ENCODE measurements at regions of chr6 and their contacts with region 1.

Region 1: GRCh38 chr6:7615611-7616383 is 25.8 kb downstream of the SNRNP48 start:
- DNase-seq: peak; percentile 32
- H3K4me3 Mint-ChIP-seq: peak overlapping the region; percentile 54
- H3K27ac Mint-ChIP-seq: peak overlapping the region; percentile 80
- H3K4me1 Mint-ChIP-seq: peaks cover 27% of the 10 kb centered on the region
- H3K27me3 Mint-ChIP-seq: peaks cover 17% of the 10 kb centered on the region
- CTCF ChIP-seq: peak; percentile 34

Region 2: GRCh38 chr6:7276199-7276524 is 339.6 kb before region 1 on chr6:
- CTCF ChIA-PET with region 1: no interaction called
- intact Hi-C with region 1: loop called (anchors 5 kb)
- DNase-seq: no peak
- H3K4me3 Mint-ChIP-seq: no peak overlapping the region
- H3K27ac Mint-ChIP-seq: no peak overlapping the region
- H3K4me1 Mint-ChIP-seq: no peaks in the 10 kb centered on the region
- H3K27me3 Mint-ChIP-seq: no peaks in the 10 kb centered on the region
- CTCF ChIP-seq: no peak